Mammary epithelial cell (primary cell): ENCODE measurements at regions of chr4 and their contacts with region 1.

Region 1: DNA sequence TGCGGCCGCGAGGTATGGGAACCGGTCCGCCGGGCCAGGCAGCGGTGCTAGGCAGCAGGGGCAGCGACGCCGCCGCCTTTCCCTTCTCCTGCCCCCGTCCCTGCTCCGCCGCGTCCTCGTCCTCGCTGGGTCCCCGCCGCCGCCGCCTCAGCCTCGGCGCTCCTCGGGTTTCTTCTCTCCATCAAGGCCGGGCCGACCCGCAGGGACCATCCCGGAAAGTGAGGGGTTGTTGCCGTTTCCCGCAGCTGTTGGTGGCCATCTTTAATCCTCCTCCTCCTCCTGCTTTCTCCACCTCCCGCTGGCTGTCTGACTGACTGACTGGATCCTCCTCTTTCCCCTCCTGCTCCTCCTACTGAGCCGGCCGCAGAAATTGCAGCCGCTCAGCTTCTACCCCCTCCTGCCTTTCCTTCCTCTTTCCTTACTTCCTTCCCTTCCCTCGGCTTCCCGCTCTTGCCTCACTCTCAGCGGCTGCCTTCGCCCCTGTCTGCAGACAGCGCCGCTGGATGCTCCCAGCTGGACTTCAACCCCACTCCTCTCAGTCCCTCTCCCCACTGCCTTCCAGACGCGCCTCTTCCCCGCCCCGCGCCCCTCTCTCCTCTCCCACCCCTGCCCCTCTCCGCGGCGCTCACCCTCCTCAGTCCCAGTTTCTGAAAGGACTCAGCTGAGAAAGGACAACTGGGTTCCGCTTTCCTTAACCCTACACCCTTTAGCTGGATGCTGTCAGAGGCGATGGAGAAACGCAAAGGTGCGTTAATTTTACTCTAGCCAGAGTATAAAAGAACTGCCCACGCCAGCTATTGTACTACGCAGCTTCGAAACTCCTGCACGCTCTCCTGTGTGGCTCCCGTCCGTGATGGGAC is at the start of gene WDFY3:
- DNase-seq: peak; percentile 89
- H3K4me3 ChIP-seq: peak within 1 kb of the TSS; percentile 57 to 96 (median 91)
- H3K27ac ChIP-seq: peak within 1 kb of the TSS; percentile 74
- H3K4me1 ChIP-seq: peaks cover 6% of the 10 kb centered on the region
- H3K27me3 ChIP-seq: no peaks in the 10 kb centered on the region
- CTCF ChIP-seq: peak in 1 of 2 donors; percentile 21
- total RNA-seq, gene WDFY3: 72.9 to 118 TPM

Region 2: GRCh38 chr4:84632092-84632491 is 334.5 kb before region 1 on chr4:
- CTCF ChIA-PET with region 1: no interaction called
- dilution Hi-C with region 1: no loop called
- in situ Hi-C with region 1: no loop called
- intact Hi-C with region 1: loop called (anchors 5 kb)
- DNase-seq: peak; percentile 79
- H3K4me3 ChIP-seq: peak overlapping the region in 2 of 3 experiments; percentile 15 to 51
- H3K27ac ChIP-seq: peak overlapping the region; percentile 93
- H3K4me1 ChIP-seq: peaks cover 30% of the 10 kb centered on the region
- H3K27me3 ChIP-seq: no peaks in the 10 kb centered on the region
- CTCF ChIP-seq: no peak

Region 3: DNA sequence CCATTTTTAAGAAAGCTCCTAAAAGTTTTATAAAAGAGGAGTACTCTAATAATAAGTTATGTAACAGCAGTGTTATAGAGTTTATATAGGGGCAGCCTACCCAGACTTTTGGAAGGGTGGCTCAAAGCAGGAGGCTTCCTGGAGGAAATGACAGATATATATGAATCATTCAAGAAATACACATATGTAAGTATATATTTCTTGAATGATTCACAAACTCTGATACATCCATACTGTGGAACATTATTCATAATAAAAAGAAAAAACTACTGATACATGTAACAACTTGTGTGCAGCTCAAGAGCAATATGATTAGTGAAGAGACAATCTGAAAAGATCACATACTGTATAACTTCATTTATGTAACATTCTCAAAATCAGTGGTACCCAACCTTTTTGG is 166.4 kb before region 1 on chr4:
- CTCF ChIA-PET with region 1: no interaction called
- dilution Hi-C with region 1: no loop called
- in situ Hi-C with region 1: no loop called
- intact Hi-C with region 1: loop called (anchors 1 kb)
- DNase-seq: peak; percentile 72
- H3K4me3 ChIP-seq: no peak overlapping the region
- H3K27ac ChIP-seq: peak overlapping the region; percentile 9
- H3K4me1 ChIP-seq: peaks cover 17% of the 10 kb centered on the region
- H3K27me3 ChIP-seq: no peaks in the 10 kb centered on the region
- CTCF ChIP-seq: no peak

Region 4: GRCh38 chr4:84887824-84888223 is 78.8 kb before region 1 on chr4:
- CTCF ChIA-PET with region 1: no interaction called
- dilution Hi-C with region 1: no loop called
- in situ Hi-C with region 1: no loop called
- intact Hi-C with region 1: no loop called
- DNase-seq: peak; percentile 18
- H3K4me3 ChIP-seq: no peak overlapping the region
- H3K27ac ChIP-seq: no peak overlapping the region
- H3K4me1 ChIP-seq: no peaks in the 10 kb centered on the region
- H3K27me3 ChIP-seq: no peaks in the 10 kb centered on the region
- CTCF ChIP-seq: no peak

Region 5: DNA sequence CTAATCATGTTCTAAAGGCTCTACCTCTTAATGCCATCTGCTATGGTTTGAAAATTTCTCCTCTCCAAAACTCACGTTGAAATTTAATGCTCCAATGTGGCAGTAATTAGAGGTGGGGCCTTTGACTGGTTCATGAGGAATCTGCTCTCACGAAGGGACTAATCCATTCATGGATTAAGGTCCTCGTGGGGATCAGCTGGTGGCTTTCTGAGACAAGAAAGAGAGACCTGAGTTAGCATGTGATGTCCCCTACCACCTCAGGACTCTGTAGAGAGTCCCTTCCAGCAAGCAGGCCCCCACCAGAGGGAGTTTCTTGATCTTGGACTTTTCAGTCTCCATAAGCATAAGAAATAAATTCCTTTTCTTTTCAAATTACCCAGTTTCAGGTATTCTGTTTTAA is 65.4 kb before region 1 on chr4:
- CTCF ChIA-PET with region 1: no interaction called
- dilution Hi-C with region 1: no loop called
- in situ Hi-C with region 1: no loop called
- intact Hi-C with region 1: loop called (anchors 5 kb)
- DNase-seq: no peak
- H3K4me3 ChIP-seq: no peak overlapping the region
- H3K27ac ChIP-seq: no peak overlapping the region
- H3K4me1 ChIP-seq: no peaks in the 10 kb centered on the region
- H3K27me3 ChIP-seq: no peaks in the 10 kb centered on the region
- CTCF ChIP-seq: no peak

Region 6: GRCh38 chr4:84952009-84952408 is 14.6 kb before region 1 on chr4:
- CTCF ChIA-PET with region 1: no interaction called
- dilution Hi-C with region 1: no loop called
- in situ Hi-C with region 1: no loop called
- intact Hi-C with region 1: loop called (anchors 1 kb)
- DNase-seq: peak; percentile 99
- H3K4me3 ChIP-seq: peak overlapping the region in 2 of 3 experiments; percentile 2 to 18
- H3K27ac ChIP-seq: peak overlapping the region; percentile 96
- H3K4me1 ChIP-seq: peaks cover 27% of the 10 kb centered on the region
- H3K27me3 ChIP-seq: no peaks in the 10 kb centered on the region
- CTCF ChIP-seq: no peak

Region 7: DNA sequence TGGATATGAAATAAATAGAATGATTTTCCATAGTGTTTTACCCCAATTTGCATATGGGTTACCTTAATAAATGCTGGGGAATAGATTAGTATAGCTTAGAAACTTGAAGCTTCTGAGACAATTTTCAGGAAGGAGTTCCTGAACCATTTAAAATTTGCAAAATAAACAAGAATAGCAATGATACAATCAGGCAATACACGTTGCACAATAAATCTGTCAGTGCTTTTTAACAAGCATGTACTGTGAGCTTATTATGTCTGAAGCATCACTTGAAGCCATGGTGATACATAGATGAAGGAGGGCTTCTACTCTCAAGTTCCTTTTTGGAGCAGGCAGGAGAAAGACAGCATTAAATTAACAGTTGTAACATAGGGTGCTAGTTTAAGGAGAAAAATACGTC is 84.1 kb after region 1 on chr4:
- CTCF ChIA-PET with region 1: no interaction called
- dilution Hi-C with region 1: no loop called
- in situ Hi-C with region 1: no loop called
- intact Hi-C with region 1: no loop called
- DNase-seq: no peak
- H3K4me3 ChIP-seq: no peak overlapping the region
- H3K27ac ChIP-seq: no peak overlapping the region
- H3K4me1 ChIP-seq: peaks cover 5% of the 10 kb centered on the region
- H3K27me3 ChIP-seq: no peaks in the 10 kb centered on the region
- CTCF ChIP-seq: no peak